ENCODE measurements at regions of chr20 and their contacts with region 1.

Region 1: GRCh38 chr20:34129518-34130162 is 17.6 kb upstream of the EIF2S2 start:
- DNase-seq: peak in 1 of 2 donors; percentile 74
- H3K4me3 ChIP-seq: peak overlapping the region in 1 of 2 donors; percentile 43
- H3K27ac ChIP-seq: no peak overlapping the region
- H3K4me1 ChIP-seq: peaks cover 0 to 4% of the 10 kb centered on the region in 2 donors
- H3K27me3 ChIP-seq: no peaks in the 10 kb centered on the region
- CTCF ChIP-seq: peak; percentile 70 to 82 (median 82)

Region 2: DNA sequence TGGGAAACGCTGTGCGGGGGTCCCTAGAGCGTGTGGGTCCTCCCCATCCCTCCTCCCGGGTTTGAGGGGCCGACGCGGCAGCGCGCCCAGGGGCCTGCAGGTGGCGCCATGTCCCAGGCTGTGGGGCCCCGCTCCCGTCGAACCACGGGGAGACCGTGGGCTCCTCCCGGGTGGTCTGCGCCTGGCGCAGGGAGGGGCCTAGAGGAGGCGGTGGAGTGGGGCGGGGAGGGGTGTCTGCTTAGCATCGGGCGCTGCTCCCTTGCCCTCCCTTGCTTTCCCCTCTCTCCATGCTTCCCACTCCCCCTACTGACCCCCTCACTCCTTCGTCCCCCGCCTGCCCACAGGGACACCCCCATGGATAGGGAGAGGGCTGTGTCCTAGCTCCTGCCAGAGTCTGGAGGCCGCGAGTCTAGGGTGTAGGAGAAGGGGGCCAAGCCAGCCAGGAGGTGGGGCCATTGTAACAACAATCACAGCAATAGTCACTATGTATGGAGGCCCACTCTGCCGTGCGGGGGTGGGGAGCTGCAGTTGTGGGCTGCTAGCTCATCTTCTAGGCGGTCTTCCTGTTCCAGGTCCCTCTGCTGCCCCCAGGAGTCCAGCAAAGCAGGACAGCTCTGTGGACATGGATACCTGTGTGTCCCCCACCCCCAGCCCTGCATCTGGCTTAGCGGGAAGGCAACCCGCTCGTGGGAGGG is 266.8 kb before region 1 on chr20:
- intact Hi-C with region 1: loop called (anchors 1 kb)
- DNase-seq: peak in 1 of 2 donors; percentile 68
- H3K4me3 ChIP-seq: peak overlapping the region in 1 of 2 donors; percentile 20
- H3K27ac ChIP-seq: no peak overlapping the region
- H3K4me1 ChIP-seq: peaks cover 4 to 5% of the 10 kb centered on the region in 2 donors
- H3K27me3 ChIP-seq: no peaks in the 10 kb centered on the region
- CTCF ChIP-seq: peak; percentile 60 to 81 (median 62)

Region 3: DNA sequence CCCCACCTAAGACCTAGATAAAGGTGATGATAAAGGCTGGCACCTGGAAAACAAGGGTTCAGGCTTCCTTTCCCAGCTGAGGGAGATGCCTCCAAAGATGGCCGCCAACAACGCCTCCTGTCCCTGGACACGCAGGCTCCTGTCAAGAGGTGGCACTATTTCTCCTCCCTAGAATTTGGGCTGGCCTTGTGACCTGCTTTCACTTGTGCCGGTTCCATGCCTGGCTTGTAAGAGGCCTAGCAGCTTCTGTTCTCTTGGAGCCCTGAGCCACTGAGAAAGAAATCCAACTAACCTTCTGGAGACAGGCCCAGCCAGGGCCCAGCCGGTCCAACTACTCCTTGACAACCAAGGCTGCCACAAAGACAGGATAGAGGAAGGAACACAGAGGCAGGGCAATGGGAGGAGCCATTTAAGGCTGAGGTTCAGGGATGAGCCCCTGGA is 196.2 kb before region 1 on chr20:
- intact Hi-C with region 1: loop called (anchors 5 kb)
- DNase-seq: peak; percentile 26 to 78
- H3K4me3 ChIP-seq: no peak overlapping the region
- H3K27ac ChIP-seq: peak overlapping the region; percentile 56 to 65
- H3K4me1 ChIP-seq: no peaks in the 10 kb centered on the region
- H3K27me3 ChIP-seq: no peaks in the 10 kb centered on the region
- CTCF ChIP-seq: peak; percentile 54 to 67 (median 66)

Region 4: DNA sequence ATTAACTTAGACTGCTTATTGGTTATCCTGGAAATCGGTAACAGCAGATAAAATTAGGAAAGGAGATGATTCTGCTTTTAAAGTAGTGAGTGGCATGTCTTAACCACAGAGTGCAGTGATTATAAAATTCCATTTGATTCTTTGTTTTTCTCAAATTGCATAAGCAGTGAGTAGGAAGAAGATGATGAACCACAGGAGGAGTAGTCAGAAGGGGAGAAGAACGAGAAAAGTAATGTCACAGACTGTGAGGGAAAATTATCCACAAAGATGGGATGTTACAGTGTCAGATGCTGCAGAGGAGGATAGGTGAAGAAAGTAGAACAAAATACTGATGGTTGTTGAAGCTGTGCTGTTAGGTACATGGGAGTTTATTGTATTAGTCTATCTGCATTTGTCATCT is 296.4 kb after region 1 on chr20:
- intact Hi-C with region 1: no loop called
- DNase-seq: no peak
- H3K4me3 ChIP-seq: no peak overlapping the region
- H3K27ac ChIP-seq: no peak overlapping the region
- H3K4me1 ChIP-seq: no peaks in the 10 kb centered on the region
- H3K27me3 ChIP-seq: no peaks in the 10 kb centered on the region
- CTCF ChIP-seq: no peak

Measured in ascending aorta (tissue), 2 donors.